ENCODE measurements at regions of chr18 and their contacts with region 1.

Region 1: DNA sequence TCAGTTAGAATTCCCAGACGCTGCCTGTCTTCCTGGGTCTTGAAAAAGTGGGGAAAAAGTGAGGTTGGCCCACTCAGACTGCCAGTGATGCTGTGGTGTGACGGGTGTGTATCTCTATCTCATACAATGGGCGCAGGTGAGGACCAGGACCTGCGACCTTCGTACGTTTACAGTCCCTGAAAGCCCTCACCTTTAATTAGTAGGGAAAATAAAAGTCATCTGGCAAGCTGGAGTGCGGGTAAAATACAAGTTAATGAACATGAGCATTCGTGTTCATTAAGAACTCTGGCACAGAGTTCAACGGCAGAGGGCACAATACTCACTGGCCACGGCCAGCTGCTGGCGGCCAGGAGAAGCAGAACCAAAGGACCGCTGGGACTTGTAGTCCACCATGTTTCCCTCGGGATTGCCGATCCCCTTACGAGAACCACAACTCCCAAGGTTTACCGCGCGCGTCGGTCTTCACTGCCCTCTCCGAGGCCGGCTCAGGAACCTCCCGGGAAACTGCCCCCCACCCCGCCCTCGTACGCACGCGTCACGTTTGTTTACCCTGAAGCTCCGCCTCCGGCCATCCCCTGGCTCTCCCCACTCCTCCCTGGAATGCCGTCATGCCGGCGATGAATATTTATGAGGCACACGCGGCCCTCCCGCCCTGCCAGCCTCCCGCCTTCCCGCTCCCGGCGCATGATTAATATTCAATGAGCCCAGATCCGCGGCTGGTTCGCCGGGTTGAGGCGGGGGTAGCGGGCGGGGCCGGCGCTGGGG is 488 bp upstream of the PHLPP1 start:
- DNase-seq: peak; percentile 100
- ATAC-seq: peak; percentile 99

Region 2: DNA sequence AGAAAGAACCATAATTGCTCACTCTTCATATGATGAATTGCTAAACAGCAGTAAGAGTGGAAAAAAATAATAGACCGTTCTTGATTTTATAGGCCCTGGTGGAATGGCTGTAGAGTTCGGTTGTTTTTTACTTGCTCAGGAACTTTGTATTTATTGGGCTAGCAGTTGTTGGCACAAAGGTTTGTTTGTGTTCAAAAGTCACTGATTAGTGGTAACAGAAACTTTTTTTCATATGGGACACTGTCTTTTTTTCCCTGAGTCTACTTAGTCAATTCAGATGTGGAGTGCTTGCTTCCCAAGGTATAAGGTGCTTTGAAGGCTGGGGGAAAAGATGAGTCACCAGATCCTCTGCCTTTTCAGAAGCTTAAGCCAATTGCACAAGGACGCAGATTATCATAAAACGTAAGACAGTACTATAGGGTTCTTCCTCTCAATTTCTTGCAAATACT is 26.3 kb after region 1 on chr18:
- intact Hi-C with region 1: no loop called
- DNase-seq: no peak
- ATAC-seq: peak; percentile 60

Region 3: DNA sequence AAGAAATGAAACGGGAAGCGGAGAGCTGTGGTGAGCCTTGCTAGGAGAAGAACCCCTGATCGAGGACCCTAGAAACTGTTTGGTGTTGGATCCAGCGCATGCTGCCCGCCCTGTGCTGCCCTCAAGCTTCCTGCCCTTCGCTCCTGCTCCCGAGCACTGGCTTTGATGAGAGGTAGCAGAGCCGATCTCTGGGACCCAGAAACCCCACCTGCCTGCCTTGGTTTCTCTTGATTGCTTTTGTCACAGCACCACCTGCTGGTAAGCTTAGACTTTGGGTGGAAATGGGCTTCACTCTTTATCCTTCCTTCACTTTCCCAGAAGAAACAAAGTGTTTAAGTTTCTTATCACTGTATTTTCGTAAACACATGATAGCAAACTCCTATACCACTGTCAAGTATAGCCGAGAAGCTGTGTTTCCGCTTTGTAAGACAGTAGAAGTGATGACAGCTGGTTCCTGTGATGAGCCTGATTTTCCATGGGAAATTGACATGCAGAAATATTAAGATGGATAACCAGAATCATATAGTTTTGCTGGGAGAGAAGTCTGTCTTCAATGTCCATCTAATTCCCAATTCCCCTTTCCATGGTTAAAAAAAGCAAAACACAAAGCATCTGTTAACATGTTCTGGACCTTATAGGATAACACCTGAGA is 267.9 kb after region 1 on chr18:
- intact Hi-C with region 1: loop called (anchors 5 kb)
- DNase-seq: peak; percentile 77
- ATAC-seq: peak; percentile 77